Naive thymus-derived CD4-positive, alpha-beta T cell (primary cell): ENCODE measurements at regions of chr5 and their contacts with region 1.

Region 1: GRCh38 chr5:96997265-96997859 is 61.5 kb downstream of the LNPEP start:
- DNase-seq: peak in 5 of 9 donors; percentile 13 to 49 (median 21)
- ATAC-seq: peak; percentile 81
- H3K4me3 ChIP-seq: no peak overlapping the region
- H3K4me3 Mint-ChIP-seq: no peak overlapping the region
- H3K27ac ChIP-seq: no peak overlapping the region
- H3K27ac Mint-ChIP-seq: peak overlapping the region in 5 of 9 donors; percentile 13 to 75 (median 53)
- H3K4me1 ChIP-seq: no peaks in the 10 kb centered on the region
- H3K4me1 Mint-ChIP-seq: peaks cover 12 to 49% (median 33%) of the 10 kb centered on the region in 7 donors
- H3K27me3 ChIP-seq: no peaks in the 10 kb centered on the region
- H3K27me3 Mint-ChIP-seq: no peaks in the 10 kb centered on the region

Region 2: DNA sequence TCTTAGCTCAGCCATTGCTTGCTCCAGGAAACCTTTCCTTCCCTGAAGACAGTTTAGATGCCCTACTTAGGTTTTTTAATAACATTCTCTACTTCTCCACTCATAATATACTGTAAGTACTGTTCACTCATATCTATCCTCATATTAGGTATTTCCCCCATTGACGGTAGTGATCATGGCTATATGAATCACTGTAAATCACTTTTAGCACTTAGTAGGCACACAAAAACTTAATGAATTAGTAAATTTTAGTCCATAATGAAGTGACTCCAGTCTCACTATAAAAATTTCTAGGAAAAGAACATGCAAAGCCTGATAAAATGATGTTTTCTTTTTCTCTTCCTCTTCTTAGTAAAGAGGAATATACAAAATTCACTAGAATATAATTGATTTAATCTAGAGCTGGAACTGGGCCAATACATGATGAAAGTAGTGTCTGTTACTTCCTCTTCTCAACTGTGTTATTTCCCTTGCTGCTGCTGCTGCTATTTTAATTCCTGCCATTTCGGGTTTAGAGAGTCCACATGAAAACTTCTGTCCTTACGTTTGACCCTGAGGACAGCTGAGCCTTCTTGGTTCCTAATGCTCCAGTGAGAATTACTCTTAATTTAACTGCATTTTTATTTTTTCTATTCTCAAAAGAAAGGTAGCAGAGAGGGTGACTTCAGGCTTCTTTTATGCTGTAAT is 12.0 kb after region 1 on chr5:
- CTCF ChIA-PET with region 1: interaction called, 5 read pairs
- POLR2A ChIA-PET with region 1: no interaction called
- intact Hi-C with region 1: loop called in 1 of 2 experiments (anchors 2 kb)
- DNase-seq: peak in 7 of 9 donors; percentile 25 to 63 (median 49)
- ATAC-seq: peak; percentile 79
- H3K4me3 ChIP-seq: no peak overlapping the region
- H3K4me3 Mint-ChIP-seq: peak overlapping the region; percentile 12 to 77 (median 64)
- H3K27ac ChIP-seq: peak overlapping the region; percentile 9
- H3K27ac Mint-ChIP-seq: peak overlapping the region; percentile 1 to 82 (median 72)
- H3K4me1 ChIP-seq: peaks cover 10 to 21% of the 10 kb centered on the region in 2 donors
- H3K4me1 Mint-ChIP-seq: peaks cover 22 to 52% (median 30%) of the 10 kb centered on the region in 7 donors
- H3K27me3 ChIP-seq: no peaks in the 10 kb centered on the region
- H3K27me3 Mint-ChIP-seq: no peaks in the 10 kb centered on the region

Region 3: GRCh38 chr5:97142521-97143254 is 145.3 kb after region 1 on chr5 and contains the start of gene LIX1:
- CTCF ChIA-PET with region 1: no interaction called
- POLR2A ChIA-PET with region 1: no interaction called
- intact Hi-C with region 1: loop called in 1 of 2 experiments (anchors 1 kb)
- DNase-seq: peak in 6 of 9 donors; percentile 5 to 46 (median 35)
- ATAC-seq: peak; percentile 77
- H3K4me3 ChIP-seq: no peak within 1 kb of the TSS
- H3K4me3 Mint-ChIP-seq: no peak within 1 kb of the TSS
- H3K27ac ChIP-seq: no peak within 1 kb of the TSS
- H3K27ac Mint-ChIP-seq: no peak within 1 kb of the TSS
- H3K4me1 ChIP-seq: no peaks in the 10 kb centered on the region
- H3K4me1 Mint-ChIP-seq: peaks cover 0 to 6% (median 0%) of the 10 kb centered on the region in 7 donors
- H3K27me3 ChIP-seq: no peaks in the 10 kb centered on the region
- H3K27me3 Mint-ChIP-seq: peaks cover 6 to 37% (median 13%) of the 10 kb centered on the region in 5 donors
- total RNA-seq, gene LIX1: not detected